ENCODE measurements at regions of chr10 and their contacts with region 1.

Region 1: DNA sequence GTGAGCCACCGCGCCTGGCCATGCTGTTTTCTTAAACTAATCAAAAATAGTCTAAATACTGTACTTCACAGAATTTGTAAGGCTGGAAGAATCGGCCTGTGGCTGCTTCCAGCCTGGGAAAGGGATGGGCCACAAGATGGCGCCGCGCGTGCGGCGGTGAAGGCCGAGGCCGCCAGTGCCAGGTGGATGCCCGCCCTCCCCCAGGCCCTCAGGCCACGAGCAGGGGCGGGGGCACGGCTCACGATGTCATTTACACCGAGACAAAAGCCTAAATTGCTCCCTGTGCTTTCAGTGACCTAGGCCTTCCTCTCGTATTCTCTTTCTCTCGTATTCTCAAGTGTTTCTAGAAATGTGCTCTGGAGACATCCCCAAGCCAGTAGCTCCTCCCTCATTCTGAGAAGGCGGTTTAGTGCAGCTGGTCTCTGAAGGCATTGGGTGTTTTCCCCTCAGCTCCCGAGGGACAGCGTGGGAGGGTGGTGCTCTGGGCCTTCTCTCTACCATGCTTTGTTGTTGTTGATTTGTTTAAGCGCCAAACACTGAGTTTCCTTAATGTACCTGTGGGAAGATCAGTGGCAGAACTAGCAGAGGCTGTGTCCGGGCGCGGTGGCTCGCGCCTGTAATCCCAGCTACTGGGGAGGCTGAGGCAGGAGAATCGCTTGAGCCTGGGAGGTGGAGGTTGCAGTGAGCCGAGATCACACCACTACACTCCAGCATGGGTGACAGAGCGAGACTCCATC is 68.4 kb downstream of the CDC123 start:
- DNase-seq: peak; percentile 73
- H3K4me3 ChIP-seq: peak overlapping the region in 2 of 3 experiments; percentile 13 to 29
- H3K27ac ChIP-seq: no peak overlapping the region
- H3K4me1 ChIP-seq: no peaks in the 10 kb centered on the region
- H3K27me3 ChIP-seq: no peaks in the 10 kb centered on the region
- CTCF ChIP-seq: peak; percentile 70 to 82
- POLR2A ChIP-seq: no peak

Region 2: DNA sequence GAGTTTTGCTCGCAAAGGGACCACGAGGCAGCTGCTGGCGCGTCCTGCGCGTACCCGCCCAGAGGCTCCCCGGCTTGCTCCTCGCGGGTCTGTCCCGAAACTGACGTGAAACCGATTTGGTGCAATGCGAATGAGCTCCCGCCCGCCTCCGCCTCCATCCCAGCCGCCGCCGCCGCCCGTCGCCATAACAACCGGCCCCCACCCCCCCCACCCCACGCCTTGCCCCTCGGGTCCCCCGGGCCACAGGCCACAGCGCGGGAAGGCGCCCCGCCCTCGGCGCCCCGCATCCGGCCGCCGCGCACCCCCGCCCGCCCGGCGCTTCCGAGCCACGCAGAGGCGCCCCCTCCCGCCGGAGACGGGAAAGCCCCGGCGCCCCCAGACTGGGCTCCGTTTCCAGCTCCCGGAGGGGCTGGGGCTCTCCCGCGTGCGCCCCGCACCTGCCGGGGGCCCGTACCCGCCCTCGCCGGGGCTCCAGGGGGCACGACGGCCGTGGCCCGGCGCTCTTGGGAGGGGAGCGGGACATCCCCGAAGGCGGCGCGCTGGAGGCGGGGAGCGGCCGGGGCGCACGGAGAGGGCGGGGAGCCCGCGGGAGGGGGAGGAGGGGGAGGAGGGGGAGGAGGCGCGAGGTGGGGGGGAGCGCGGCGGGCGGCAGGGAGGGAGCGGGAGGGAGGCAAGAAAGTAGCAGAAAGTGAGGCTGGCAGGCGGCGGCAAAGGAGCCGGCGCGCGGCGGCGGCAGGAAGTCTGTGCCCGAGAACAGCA is 84.7 kb after region 1 on chr10 and contains the start of gene CAMK1D:
- CTCF ChIA-PET with region 1: interaction called, 8 read pairs
- POLR2A ChIA-PET with region 1: no interaction called
- dilution Hi-C with region 1: no loop called
- intact Hi-C with region 1: loop called (anchors 5 kb)
- DNase-seq: peak; percentile 40
- H3K4me3 ChIP-seq: peak within 1 kb of the TSS; percentile 19 to 62 (median 25)
- H3K27ac ChIP-seq: no peak within 1 kb of the TSS
- H3K4me1 ChIP-seq: peaks cover 6% of the 10 kb centered on the region
- H3K27me3 ChIP-seq: peaks cover 13 to 14% of the 10 kb centered on the region in 2 experiments
- CTCF ChIP-seq: peak in 1 of 2 donors; percentile 6
- POLR2A ChIP-seq: no peak
- total RNA-seq, gene CAMK1D: 1.1 and 4.2 TPM in 2 replicates

Region 3: GRCh38 chr10:12806228-12807095 is 542.1 kb after region 1 on chr10:
- CTCF ChIA-PET with region 1: no interaction called
- POLR2A ChIA-PET with region 1: interaction called, 11 read pairs
- dilution Hi-C with region 1: no loop called
- intact Hi-C with region 1: no loop called
- DNase-seq: no peak
- H3K4me3 ChIP-seq: no peak overlapping the region
- H3K27ac ChIP-seq: no peak overlapping the region
- H3K4me1 ChIP-seq: peaks cover 6% of the 10 kb centered on the region
- H3K27me3 ChIP-seq: no peaks in the 10 kb centered on the region
- CTCF ChIP-seq: no peak
- POLR2A ChIP-seq: no peak

Region 4: DNA sequence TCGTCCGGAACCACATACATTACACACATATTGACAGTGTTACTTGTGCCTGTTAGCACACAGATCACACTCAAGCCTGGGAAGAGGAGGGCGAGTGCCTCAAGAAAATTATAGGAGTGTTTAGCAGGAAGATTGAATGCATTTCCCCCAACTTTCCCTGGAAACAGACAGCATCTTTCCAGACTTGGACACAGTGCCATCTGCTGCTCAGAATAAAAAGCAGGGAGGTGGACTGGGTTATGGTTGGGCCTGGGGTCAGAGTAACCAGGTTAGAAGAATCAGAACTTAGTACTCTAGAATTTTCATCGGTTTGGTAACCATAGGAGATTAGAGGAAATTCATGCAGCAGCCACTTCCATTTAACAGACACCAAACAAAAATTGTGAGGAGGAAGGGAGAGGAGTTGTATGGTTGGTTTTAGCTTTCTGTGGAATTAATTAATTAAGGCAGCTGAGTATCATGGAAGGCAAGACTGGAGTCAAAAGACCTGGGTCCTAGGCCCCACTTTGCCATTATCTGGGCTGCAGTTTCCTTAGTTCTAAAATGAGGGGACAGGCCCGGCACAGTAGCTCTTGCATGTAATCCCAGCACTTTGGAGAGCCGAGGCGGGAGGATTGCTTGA is 792.2 kb after region 1 on chr10:
- CTCF ChIA-PET with region 1: interaction called, 19 read pairs
- POLR2A ChIA-PET with region 1: no interaction called
- dilution Hi-C with region 1: no loop called
- intact Hi-C with region 1: no loop called
- DNase-seq: peak; percentile 22
- H3K4me3 ChIP-seq: no peak overlapping the region
- H3K27ac ChIP-seq: no peak overlapping the region
- H3K4me1 ChIP-seq: no peaks in the 10 kb centered on the region
- H3K27me3 ChIP-seq: no peaks in the 10 kb centered on the region
- CTCF ChIP-seq: peak; percentile 15 to 38
- POLR2A ChIP-seq: no peak

Region 5: GRCh38 chr10:13074561-13075451 is 810.4 kb after region 1 on chr10:
- CTCF ChIA-PET with region 1: interaction called, 40 read pairs
- POLR2A ChIA-PET with region 1: no interaction called
- dilution Hi-C with region 1: no loop called
- intact Hi-C with region 1: loop called (anchors 1 kb)
- DNase-seq: peak; percentile 61
- H3K4me3 ChIP-seq: no peak overlapping the region
- H3K27ac ChIP-seq: no peak overlapping the region
- H3K4me1 ChIP-seq: no peaks in the 10 kb centered on the region
- H3K27me3 ChIP-seq: peaks cover 5 to 7% of the 10 kb centered on the region in 2 experiments
- CTCF ChIP-seq: peak; percentile 83
- POLR2A ChIP-seq: no peak